Cardiac septum (tissue), 1 donor: ENCODE measurements at regions of chr7 and their contacts with region 1.

Region 1: DNA sequence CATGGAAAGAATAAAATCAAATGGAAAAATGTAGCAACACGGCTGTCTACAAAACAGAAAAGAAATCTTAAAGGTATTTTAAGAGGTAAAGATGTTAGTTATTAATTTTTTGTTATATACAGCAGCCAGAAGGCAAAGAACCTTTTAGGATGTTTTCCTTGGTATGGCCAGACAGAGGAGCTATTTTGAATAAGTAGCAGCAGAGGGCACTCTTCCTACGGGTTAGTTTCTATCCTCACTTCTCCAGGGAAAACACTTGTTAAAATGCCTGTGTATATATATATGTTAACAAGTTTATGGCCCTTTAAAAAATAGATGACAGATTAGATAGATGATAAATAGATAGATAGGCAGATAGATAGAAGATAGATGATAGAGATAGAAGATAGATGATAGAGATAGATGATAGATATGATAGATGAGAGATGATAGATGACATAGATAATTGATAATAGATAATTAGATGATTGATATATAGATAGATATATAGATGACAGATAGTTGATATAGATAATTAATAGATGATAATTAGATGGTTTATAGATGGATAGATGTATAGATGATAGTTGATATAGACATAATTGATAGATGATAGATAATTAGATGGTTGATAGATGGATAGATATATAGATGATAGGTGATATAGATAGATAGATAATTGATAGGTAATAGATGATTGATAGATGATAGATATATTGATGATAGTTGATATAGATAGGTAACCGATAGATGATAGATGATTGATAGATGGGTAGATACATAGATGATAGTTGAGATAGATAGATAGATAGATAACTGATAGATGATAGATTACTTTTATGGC is 57.8 kb upstream of the WIPF3 start:
- DNase-seq: no peak

Region 2: GRCh38 chr7:29471444-29472138 is 276.9 kb before region 1 on chr7:
- intact Hi-C with region 1: no loop called
- DNase-seq: no peak

Region 3: DNA sequence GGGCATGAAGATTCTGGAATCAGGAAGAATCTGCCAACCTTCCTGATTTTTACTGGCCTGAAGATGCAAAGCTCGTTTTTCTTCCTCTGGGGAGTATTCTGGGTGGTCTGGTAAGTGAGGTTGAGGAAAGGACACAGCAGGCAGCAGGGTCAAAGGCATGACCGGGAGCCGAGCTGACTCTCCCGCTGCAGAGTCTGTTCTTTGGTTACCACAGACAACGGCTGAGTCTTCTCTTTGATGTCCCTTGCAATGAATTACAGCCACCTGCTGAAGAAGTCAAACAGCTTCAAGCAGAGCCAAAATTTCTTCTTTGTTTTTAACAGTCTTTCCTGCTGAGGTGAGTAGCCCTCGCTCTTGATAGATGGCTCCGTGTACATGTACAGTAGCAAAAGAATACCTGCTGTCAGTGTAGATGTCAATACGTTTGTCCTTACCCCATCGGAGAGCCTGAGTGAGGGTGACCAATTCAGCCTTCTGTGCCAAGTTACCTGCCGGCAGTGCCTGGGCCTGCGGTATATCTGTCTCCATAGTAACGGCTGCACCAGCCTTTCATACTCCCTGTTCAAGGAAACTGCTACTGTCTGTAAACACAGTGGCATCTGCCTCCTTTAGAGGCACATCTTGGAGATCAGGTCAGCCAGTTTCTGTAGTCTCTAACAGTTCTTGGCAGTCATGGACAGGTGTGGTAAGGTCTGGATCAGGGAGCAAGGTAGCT is 108.5 kb before region 1 on chr7:
- intact Hi-C with region 1: loop called (anchors 5 kb)
- DNase-seq: no peak

Region 4: DNA sequence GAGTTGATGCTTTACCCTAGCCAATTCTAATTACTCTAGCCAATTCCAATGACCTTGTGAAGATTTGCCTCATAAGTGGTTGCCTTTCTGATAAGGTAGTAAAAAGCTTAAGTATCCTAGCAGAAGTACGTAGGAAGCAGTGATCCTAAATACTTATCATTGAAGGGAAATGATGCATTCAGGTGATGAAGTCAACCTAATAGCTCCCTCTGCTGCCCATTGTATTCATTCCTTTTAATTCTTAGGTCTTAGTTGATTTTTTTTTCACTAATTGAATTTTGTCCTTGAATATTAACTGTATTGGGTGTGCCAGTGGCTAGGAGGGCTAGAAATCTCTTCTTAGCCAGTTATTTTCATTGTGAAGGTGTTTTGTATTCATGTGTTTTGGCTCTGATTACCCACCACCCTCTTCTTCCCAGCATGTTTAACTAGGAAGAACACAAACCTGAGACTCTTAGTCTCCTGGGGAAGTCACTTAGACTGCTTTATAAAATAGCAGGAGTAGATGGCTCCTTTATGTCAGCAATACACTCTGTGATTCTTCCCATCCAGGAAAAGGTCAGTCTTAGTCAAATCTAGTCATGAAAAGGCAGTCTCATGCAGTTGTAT is 326.0 kb after region 1 on chr7:
- intact Hi-C with region 1: loop called (anchors 10 kb)
- DNase-seq: no peak